ENCODE measurements at regions of chr19 and their contacts with region 1.

Region 1: GRCh38 chr19:43532962-43533545 is at the start of gene ZNF575:
- DNase-seq: peak; percentile 95
- ATAC-seq: peak; percentile 57
- H3K4me3 Mint-ChIP-seq: peak within 1 kb of the TSS; percentile 83
- H3K27ac Mint-ChIP-seq: peak within 1 kb of the TSS; percentile 97
- H3K4me1 Mint-ChIP-seq: peaks cover 20% of the 10 kb centered on the region
- H3K27me3 Mint-ChIP-seq: no peaks in the 10 kb centered on the region
- total RNA-seq, gene ZNF575: 3.4 to 4.3 TPM

Region 2: DNA sequence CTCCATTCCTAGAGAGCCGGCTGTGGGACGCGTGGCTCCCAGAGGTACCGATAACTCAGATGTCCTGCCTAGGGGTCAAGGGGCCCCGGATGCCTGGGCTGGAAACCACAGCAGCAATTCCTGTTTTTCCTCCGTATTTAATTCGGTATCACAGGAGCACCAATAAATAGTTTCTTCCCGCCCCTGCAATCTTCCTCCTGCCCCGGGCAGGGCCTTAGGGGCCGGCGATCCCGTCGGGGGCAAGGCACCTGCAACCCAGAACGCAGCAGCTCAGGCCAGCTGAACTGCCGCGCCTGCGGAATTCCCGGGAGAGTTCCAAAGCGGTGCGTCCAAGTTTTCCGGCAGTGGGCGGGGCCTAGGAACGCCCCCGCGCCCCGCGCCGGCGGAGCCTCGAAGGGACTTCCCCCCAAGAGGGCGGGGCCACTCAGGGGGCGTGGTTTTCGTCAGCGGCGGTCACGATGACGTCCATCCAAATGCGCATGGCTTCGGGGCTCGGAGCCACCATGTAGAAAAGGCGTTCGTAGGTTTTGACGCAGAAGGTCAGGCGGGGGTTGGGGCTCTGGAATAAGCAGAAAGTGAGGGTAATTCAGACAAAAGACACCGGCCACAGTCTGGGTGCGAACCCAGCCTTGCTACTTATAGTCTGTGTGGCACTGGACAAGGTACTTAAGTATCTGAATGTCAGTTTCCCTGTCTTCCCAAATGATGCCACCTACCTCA is 57.9 kb before region 1 on chr19:
- CTCF ChIA-PET with region 1: no interaction called
- POLR2A ChIA-PET with region 1: no interaction called
- intact Hi-C with region 1: loop called in 1 of 2 experiments (anchors 1 kb)
- DNase-seq: peak; percentile 98
- ATAC-seq: peak; percentile 86
- H3K4me3 Mint-ChIP-seq: peak overlapping the region; percentile 62
- H3K27ac Mint-ChIP-seq: peak overlapping the region; percentile 90
- H3K4me1 Mint-ChIP-seq: peaks cover 35% of the 10 kb centered on the region
- H3K27me3 Mint-ChIP-seq: no peaks in the 10 kb centered on the region

Region 3: DNA sequence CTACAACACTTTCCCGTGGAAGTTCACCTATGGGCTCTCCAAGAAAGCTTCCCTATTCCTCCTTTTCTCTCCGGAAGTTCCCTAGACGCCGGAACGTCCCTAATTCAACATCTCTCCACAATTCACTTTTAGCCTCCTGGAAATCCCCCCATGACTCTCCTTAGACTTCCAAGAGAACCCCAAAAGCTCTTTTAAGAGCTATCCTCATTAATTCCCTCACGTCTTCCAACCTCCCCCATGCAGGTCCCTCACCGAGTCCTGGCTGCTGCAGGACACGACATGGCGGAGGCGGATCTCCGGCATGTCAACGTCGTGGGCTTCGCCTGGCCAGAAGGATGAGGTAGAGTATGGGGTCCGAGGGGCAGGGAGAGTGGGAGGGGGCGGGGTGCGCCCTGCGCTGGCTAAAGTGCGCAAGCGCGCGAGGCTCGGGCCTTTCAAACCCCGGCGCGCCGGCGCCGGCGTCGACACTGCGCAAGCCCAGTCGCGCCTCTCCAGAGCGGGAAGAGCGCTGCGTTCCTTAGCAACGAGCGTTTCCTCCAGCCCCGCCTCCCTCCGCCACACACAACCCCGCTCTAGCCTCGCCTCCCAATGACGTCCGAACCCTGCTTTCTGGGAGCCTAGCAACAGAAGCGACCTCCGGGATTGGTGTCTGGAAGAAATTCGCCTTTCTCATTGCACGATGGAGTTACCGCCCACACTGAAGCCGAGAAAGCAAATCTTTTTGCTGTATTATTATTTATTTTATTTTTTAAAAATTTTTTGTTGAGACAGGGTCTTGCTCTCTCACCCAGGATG is 42.3 kb after region 1 on chr19 and contains the starts of genes PINLYP and XRCC1:
- CTCF ChIA-PET with region 1: interaction called, 5 read pairs
- POLR2A ChIA-PET with region 1: interaction called, 7 read pairs
- intact Hi-C with region 1: loop called in 1 of 2 experiments (anchors 1 kb)
- DNase-seq: peak; percentile 99
- ATAC-seq: peak; percentile 99
- H3K4me3 Mint-ChIP-seq: peak within 1 kb of the TSS; percentile 87
- H3K27ac Mint-ChIP-seq: peak within 1 kb of the TSS; percentile 94
- H3K4me1 Mint-ChIP-seq: peaks cover 41% of the 10 kb centered on the region
- H3K27me3 Mint-ChIP-seq: no peaks in the 10 kb centered on the region
- total RNA-seq, gene PINLYP: 3.5 to 3.6 TPM
- total RNA-seq, gene XRCC1: 31.6 to 40.0 TPM

Region 4: GRCh38 chr19:43619262-43620060 is 86.4 kb after region 1 on chr19 and contains the start of gene ZNF428:
- CTCF ChIA-PET with region 1: interaction called, 4 read pairs
- POLR2A ChIA-PET with region 1: interaction called, 3 read pairs
- intact Hi-C with region 1: loop called in 1 of 2 experiments (anchors 1 kb)
- DNase-seq: peak; percentile 94
- ATAC-seq: peak; percentile 92
- H3K4me3 Mint-ChIP-seq: peak within 1 kb of the TSS; percentile 94
- H3K27ac Mint-ChIP-seq: peak within 1 kb of the TSS; percentile 99
- H3K4me1 Mint-ChIP-seq: peaks cover 17% of the 10 kb centered on the region
- H3K27me3 Mint-ChIP-seq: no peaks in the 10 kb centered on the region
- total RNA-seq, gene ZNF428: 9.0 to 10.1 TPM